ENCODE measurements at regions of chr3 and their contacts with region 1.

Region 1: DNA sequence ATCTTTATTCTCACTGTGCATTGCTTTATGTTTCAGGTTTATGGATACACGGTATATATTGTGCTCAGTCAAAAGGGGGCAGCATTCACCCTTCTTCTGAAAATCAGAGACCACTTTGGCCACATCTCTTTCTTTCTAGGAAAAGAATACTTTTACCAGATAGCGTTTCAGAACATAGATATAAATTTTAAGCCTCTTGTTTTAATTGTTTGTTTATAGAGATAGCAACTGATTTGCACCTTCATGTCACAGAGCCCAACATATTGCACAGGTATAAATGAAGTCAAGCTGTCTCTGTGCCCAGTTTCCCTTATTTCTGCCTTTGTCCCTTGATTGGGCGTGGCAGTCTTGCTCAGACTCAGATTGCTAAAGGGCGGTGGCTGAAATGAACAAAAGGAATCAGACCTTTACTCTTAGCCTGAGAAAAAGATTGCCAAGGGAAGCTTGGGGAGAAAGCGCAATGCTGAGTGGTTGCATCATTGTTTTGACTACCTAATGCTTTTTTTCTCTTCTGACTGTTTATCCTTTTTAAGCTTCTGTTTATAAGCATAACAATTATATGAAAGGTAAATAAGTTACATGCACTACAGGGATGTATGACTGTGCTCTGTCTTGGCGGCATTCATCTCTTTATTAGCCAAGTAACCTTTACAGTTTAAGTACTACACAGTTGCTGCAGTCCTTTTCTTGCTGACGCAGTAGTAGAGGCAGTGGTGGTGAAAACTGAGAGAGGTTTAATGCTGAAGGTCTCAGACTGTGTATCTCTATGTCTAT is 70.8 kb upstream of the ZBTB20 start:
- ATAC-seq: peak; percentile 84 to 95 (median 89)
- H3K4me3 ChIP-seq: no peak overlapping the region
- H3K27ac ChIP-seq: peak overlapping the region in 1 of 2 donors; percentile 6
- H3K4me1 ChIP-seq: peaks cover 17 to 20% of the 10 kb centered on the region in 2 donors

Region 2: GRCh38 chr3:115783938-115784738 is 566.3 kb after region 1 on chr3:
- in situ Hi-C with region 1: loop called in 2 of 9 experiments (anchors 25 kb)
- ATAC-seq: peak; percentile 80 to 91 (median 86)
- H3K4me3 ChIP-seq: peak overlapping the region; percentile 34 to 67 (median 50)
- H3K27ac ChIP-seq: peak overlapping the region; percentile 90 to 98
- H3K4me1 ChIP-seq: peaks cover 10 to 15% of the 10 kb centered on the region in 2 donors

Region 3: GRCh38 chr3:116216761-116217160 is 998.9 kb after region 1 on chr3:
- in situ Hi-C with region 1: no loop called
- ATAC-seq: no peak
- H3K4me3 ChIP-seq: no peak overlapping the region
- H3K27ac ChIP-seq: no peak overlapping the region
- H3K4me1 ChIP-seq: no peaks in the 10 kb centered on the region

Measured in motor neuron (in vitro differentiated cells).